Thyroid gland (tissue), 4 donors: ENCODE measurements at regions of chr9 and their contacts with region 1.

Region 1: GRCh38 chr9:68999393-69000105 is 14.4 kb downstream of the PRKACG start:
- DNase-seq: peak; percentile 48 to 59
- H3K4me3 ChIP-seq: no peak overlapping the region
- H3K27ac ChIP-seq: no peak overlapping the region
- H3K4me1 ChIP-seq: no peaks in the 10 kb centered on the region
- H3K27me3 ChIP-seq: no peaks in the 10 kb centered on the region
- CTCF ChIP-seq: peak in 5 of 6 experiments; percentile 42 to 85 (median 75)
- POLR2A ChIP-seq: no peak

Region 2: DNA sequence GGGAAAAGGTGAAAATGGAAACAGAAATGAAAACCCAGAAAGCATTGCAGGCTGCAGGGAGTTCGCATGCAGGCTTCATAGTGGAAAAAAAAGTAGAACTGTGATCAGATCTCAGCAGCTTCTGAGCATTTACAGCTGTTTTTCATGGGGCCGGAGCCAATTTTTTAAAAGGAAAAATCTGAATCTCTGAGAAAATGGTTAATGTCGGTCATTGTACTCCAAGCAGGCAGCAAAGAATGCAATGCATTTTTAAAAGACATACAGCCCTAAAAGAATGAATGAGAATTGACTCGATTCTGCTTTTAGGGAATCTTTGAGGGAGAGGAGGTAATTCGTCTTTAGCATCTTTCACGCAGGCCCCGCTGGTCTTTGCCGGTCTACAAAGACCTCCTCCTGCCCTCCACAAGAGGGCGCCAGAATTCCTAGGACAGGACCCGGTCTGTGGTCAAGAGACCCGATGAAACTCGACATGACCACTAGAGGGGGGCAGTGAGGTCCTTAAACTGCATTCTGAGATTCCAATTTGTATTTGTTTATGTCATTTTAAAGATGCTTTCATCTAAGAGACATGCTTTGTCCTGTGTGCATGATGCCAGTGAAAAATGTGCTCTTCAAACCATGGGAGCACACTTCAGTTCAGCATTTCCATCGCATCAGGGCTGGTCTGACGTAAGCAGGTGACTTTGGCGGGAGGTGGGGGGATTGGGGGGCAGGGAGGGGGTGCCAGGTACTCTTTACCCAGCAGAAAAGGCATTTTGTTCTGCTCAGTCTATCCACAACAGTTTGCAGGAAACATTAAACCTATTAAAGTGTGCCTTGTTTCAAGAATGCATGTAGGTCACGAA is 415.1 kb before region 1 on chr9:
- intact Hi-C with region 1: loop called (anchors 2 kb)
- DNase-seq: peak; percentile 76 to 86
- H3K4me3 ChIP-seq: no peak overlapping the region
- H3K27ac ChIP-seq: no peak overlapping the region
- H3K4me1 ChIP-seq: no peaks in the 10 kb centered on the region
- H3K27me3 ChIP-seq: no peaks in the 10 kb centered on the region
- CTCF ChIP-seq: peak; percentile 74 to 97 (median 91)
- POLR2A ChIP-seq: no peak

Region 3: DNA sequence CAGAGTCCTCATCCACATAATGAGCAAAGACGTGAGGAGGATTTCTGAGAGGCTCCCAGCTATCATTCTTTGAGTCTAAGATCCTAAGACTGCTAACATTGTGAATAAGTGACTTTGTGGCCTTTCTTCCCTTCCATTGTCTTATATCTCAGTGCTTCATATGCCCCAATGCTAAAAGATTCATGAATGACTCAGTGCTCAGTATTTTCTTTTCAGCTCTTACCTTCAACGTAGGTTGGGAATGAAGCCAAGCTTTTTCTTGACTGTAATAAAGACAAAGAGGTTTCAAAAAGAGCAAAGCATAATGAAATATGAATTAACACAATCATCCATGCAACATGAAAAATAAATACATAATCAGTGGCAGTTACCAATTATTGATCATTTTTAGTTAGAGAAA is 471.9 kb after region 1 on chr9:
- intact Hi-C with region 1: no loop called
- DNase-seq: no peak
- H3K4me3 ChIP-seq: no peak overlapping the region
- H3K27ac ChIP-seq: no peak overlapping the region
- H3K4me1 ChIP-seq: peaks cover 5 to 13% of the 10 kb centered on the region in 2 donors
- H3K27me3 ChIP-seq: no peaks in the 10 kb centered on the region
- CTCF ChIP-seq: no peak
- POLR2A ChIP-seq: no peak